Activated naive CD8-positive, alpha-beta T cell treated with anti-CD3 and anti-CD28 coated beads, Interleukin-2, amount 10 ng/mL, durations not matched to agents 7 days and 5 days (primary cell): ENCODE measurements at regions of chr1 and their contacts with region 1.

Region 1: GRCh38 chr1:53220171-53220961 is at the start of gene CZIB:
- DNase-seq: peak; percentile 97
- ATAC-seq: peak; percentile 94
- H3K4me3 Mint-ChIP-seq: peak within 1 kb of the TSS; percentile 92
- H3K27ac Mint-ChIP-seq: peak within 1 kb of the TSS; percentile 94
- H3K4me1 Mint-ChIP-seq: peaks cover 15% of the 10 kb centered on the region
- H3K27me3 Mint-ChIP-seq: no peaks in the 10 kb centered on the region
- total RNA-seq, gene CZIB: 57.7 to 63.1 TPM

Region 2: GRCh38 chr1:53196485-53197270 is 23.7 kb before region 1 on chr1 and contains the start of gene CPT2:
- POLR2A ChIA-PET with region 1: interaction called, 18 read pairs
- DNase-seq: peak; percentile 95
- ATAC-seq: peak; percentile 98
- H3K4me3 Mint-ChIP-seq: peak within 1 kb of the TSS; percentile 90
- H3K27ac Mint-ChIP-seq: peak within 1 kb of the TSS; percentile 96
- H3K4me1 Mint-ChIP-seq: peaks cover 22% of the 10 kb centered on the region
- H3K27me3 Mint-ChIP-seq: no peaks in the 10 kb centered on the region
- total RNA-seq, gene CPT2: 15.5 to 18.1 TPM

Region 3: GRCh38 chr1:53207726-53208125 is 12.6 kb before region 1 on chr1:
- POLR2A ChIA-PET with region 1: no interaction called
- DNase-seq: no peak
- ATAC-seq: no peak
- H3K4me3 Mint-ChIP-seq: no peak overlapping the region
- H3K27ac Mint-ChIP-seq: no peak overlapping the region
- H3K4me1 Mint-ChIP-seq: no peaks in the 10 kb centered on the region
- H3K27me3 Mint-ChIP-seq: no peaks in the 10 kb centered on the region

Region 4: GRCh38 chr1:53246261-53247134 is 26.1 kb after region 1 on chr1:
- POLR2A ChIA-PET with region 1: no interaction called
- DNase-seq: no peak
- ATAC-seq: no peak
- H3K4me3 Mint-ChIP-seq: no peak overlapping the region
- H3K27ac Mint-ChIP-seq: no peak overlapping the region
- H3K4me1 Mint-ChIP-seq: no peaks in the 10 kb centered on the region
- H3K27me3 Mint-ChIP-seq: no peaks in the 10 kb centered on the region